ENCODE measurements at regions of chr16 and their contacts with region 1.

Region 1: GRCh38 chr16:1983544-1984346 is at the start of gene GFER:
- DNase-seq: peak; percentile 82
- H3K4me3 Mint-ChIP-seq: peak within 1 kb of the TSS; percentile 76
- H3K27ac Mint-ChIP-seq: no peak within 1 kb of the TSS
- H3K4me1 Mint-ChIP-seq: peaks cover 10% of the 10 kb centered on the region
- H3K27me3 Mint-ChIP-seq: no peaks in the 10 kb centered on the region
- CTCF ChIP-seq: no peak
- total RNA-seq, gene GFER: 34.6 and 40.8 TPM in 2 replicates

Region 2: DNA sequence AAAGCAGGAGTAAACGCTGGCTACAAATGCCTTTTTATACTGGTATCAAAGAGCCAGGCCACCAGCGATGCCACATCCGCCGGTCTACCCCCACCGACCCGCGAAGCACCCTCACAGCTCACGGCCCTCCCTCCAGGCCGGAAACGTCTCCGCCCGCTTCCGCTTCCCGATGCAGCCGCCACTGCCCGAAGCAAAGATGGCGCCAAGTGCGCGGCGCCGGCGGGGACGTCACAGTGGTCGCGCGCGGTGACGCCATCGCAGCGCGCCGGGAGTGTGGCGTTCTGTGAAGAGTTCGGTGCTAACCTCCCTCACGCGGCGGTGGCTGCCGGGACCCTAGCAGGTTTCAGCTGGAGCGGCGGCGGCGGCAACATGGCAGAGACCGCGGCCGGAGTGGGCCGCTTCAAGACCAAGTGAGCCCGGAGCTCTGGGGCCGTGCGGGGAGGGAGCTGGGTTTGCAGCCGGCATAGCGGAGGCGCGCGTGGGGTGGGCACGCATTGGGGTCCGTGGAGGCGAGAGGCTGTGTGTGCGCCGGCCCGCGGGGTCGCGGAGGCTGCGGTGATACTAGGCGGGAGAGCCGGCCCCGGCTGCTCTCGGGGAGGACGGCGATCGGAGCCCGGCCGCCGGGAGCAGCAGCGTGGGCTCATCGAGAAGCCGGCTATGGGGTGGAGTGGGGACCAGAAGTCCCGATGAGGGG is 11.8 kb before region 1 on chr16 and contains the start of gene TBL3:
- CTCF ChIA-PET with region 1: interaction called, 5 read pairs
- POLR2A ChIA-PET with region 1: interaction called, 15 read pairs
- intact Hi-C with region 1: no loop called
- DNase-seq: peak; percentile 92
- H3K4me3 Mint-ChIP-seq: peak within 1 kb of the TSS; percentile 92
- H3K27ac Mint-ChIP-seq: peak within 1 kb of the TSS; percentile 95
- H3K4me1 Mint-ChIP-seq: peaks cover 13% of the 10 kb centered on the region
- H3K27me3 Mint-ChIP-seq: no peaks in the 10 kb centered on the region
- CTCF ChIP-seq: no peak
- total RNA-seq, gene TBL3: 25.8 and 26.8 TPM in 2 replicates